H1 (cell line): ENCODE measurements at regions of chr15 and their contacts with region 1.

Region 1: GRCh38 chr15:42137431-42138261 is 18.8 kb downstream of the PLA2G4F start:
- DNase-seq: peak in 1 of 2 experiments; percentile 56
- H3K4me3 ChIP-seq: no peak overlapping the region
- H3K27ac ChIP-seq: no peak overlapping the region
- H3K4me1 ChIP-seq: no peaks in the 10 kb centered on the region
- H3K27me3 ChIP-seq: no peaks in the 10 kb centered on the region
- CTCF ChIP-seq: peak; percentile 46 to 64 (median 48)
- EP300 ChIP-seq: no peak
- POLR2A ChIP-seq: no peak
- RAD21 ChIP-seq: peak; percentile 67 to 72

Region 2: GRCh38 chr15:41980654-41981323 is 156.9 kb before region 1 on chr15:
- CTCF ChIA-PET with region 1: interaction called, 10 read pairs
- POLR2A ChIA-PET with region 1: no interaction called
- DNase-seq: no peak
- H3K4me3 ChIP-seq: no peak overlapping the region
- H3K27ac ChIP-seq: no peak overlapping the region
- H3K4me1 ChIP-seq: no peaks in the 10 kb centered on the region; a peak in 1 of 7 replicates
- H3K27me3 ChIP-seq: no peaks in the 10 kb centered on the region; a peak in 1 of 7 replicates
- CTCF ChIP-seq: no peak
- EP300 ChIP-seq: no peak
- POLR2A ChIP-seq: no peak
- RAD21 ChIP-seq: no peak

Region 3: GRCh38 chr15:42056934-42057779 is 80.5 kb before region 1 on chr15:
- CTCF ChIA-PET with region 1: interaction called, 416 read pairs
- POLR2A ChIA-PET with region 1: no interaction called
- DNase-seq: peak; percentile 77 to 90
- H3K4me3 ChIP-seq: peak overlapping the region; percentile 4 to 50 (median 26); a peak in 5 of 8 replicates
- H3K27ac ChIP-seq: no peak overlapping the region
- H3K4me1 ChIP-seq: no peaks in the 10 kb centered on the region
- H3K27me3 ChIP-seq: no peaks in the 10 kb centered on the region; a peak in 1 of 7 replicates
- CTCF ChIP-seq: peak; percentile 59 to 88 (median 85)
- EP300 ChIP-seq: peak in 1 of 2 experiments; percentile 37; a peak in 1 of 3 replicates
- POLR2A ChIP-seq: no peak
- RAD21 ChIP-seq: peak; percentile 74 to 82

Region 4: DNA sequence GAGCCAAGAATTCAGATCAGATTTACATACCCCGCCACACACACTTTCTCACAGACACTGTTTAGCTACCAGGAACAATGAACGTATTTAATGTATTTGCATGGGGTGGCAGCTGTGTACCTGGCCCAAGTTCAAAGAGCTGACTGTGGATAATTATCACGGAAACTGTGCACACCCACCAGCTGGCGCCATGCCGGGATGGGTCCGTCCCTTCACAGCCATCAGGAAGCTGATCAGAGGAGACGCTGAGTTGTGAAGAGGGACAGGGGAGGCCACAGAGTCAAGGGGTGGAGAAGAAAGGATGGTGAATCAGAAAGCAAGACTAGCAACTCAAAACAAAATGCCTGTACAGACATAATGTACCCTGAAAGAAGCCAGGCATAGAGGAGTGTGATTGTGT is 30.2 kb before region 1 on chr15:
- CTCF ChIA-PET with region 1: interaction called, 12 read pairs
- POLR2A ChIA-PET with region 1: interaction called, 3 read pairs
- DNase-seq: no peak
- H3K4me3 ChIP-seq: no peak overlapping the region
- H3K27ac ChIP-seq: no peak overlapping the region
- H3K4me1 ChIP-seq: no peaks in the 10 kb centered on the region
- H3K27me3 ChIP-seq: no peaks in the 10 kb centered on the region
- CTCF ChIP-seq: no peak
- EP300 ChIP-seq: no peak
- POLR2A ChIP-seq: no peak
- RAD21 ChIP-seq: no peak

Region 5: DNA sequence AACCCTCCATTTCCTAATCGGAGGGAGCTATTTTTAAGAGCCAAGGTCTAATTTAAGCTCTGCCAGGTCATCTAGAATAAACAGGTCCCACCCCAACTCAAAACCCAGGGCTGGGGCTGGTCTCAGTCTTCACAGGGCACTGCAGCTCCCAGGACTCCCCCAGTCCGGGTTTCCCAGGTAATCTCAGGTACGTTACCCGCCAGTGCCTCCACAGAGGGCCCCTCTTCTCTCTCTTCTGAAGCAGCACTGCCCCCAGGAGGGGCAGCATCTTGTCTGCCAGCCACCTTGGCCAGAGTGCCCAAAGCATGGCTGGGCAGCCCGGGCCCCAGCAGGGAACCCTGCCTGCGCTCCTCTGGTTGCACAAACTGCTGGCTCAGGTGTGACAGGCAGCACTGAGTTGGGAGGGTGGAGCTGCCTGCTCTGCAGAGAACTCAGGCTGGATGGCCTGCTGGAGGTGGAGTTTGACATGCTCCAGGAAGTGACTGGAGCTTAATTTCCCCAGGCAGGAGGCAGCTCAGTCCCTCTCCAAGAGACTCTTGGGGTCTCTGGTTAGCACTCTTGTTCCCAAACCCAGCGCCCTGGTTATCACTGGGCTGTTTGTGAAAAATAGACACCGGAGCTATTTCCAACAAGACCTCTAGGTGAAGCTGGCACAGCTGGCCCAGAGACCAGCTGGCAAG is 18.7 kb after region 1 on chr15 and contains the start of gene PLA2G4F:
- CTCF ChIA-PET with region 1: interaction called, 12 read pairs
- POLR2A ChIA-PET with region 1: no interaction called
- DNase-seq: no peak
- H3K4me3 ChIP-seq: no peak within 1 kb of the TSS
- H3K27ac ChIP-seq: no peak within 1 kb of the TSS
- H3K4me1 ChIP-seq: no peaks in the 10 kb centered on the region; a peak in 1 of 7 replicates
- H3K27me3 ChIP-seq: no peaks in the 10 kb centered on the region
- CTCF ChIP-seq: 0 out of 4 replicates have a peak, but pooled peaks of 1 of the 3 experiments have one; percentile 4
- EP300 ChIP-seq: no peak
- POLR2A ChIP-seq: no peak
- RAD21 ChIP-seq: no peak; a peak in 2 of 4 replicates
- total RNA-seq, gene PLA2G4F: not detected in 2 replicates

Region 6: DNA sequence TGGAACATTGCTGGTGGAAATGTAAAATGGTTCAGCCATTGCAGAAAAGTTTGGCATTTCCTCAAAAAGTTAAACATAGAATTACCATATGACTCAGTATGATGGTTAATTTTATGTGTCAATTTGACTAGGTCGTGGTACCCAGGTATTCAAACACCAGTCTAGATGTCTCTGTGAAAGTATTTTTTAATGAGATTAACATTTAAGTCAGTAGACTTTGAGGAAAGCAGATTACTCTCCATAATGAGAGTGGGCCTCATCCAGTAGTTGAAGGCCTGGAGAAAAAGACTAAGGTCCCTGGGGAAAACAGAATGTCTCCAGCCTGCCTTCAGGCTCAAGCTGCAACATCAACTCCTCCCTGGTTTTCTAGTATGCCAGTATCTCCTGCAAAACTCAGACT is 177.9 kb after region 1 on chr15:
- CTCF ChIA-PET with region 1: no interaction called
- POLR2A ChIA-PET with region 1: no interaction called
- DNase-seq: no peak
- H3K4me3 ChIP-seq: no peak overlapping the region
- H3K27ac ChIP-seq: no peak overlapping the region
- H3K4me1 ChIP-seq: no peaks in the 10 kb centered on the region
- H3K27me3 ChIP-seq: no peaks in the 10 kb centered on the region
- CTCF ChIP-seq: no peak
- EP300 ChIP-seq: no peak
- POLR2A ChIP-seq: no peak
- RAD21 ChIP-seq: no peak